A549 (cell line): ENCODE measurements at regions of chr10 and their contacts with region 1.

Region 1: DNA sequence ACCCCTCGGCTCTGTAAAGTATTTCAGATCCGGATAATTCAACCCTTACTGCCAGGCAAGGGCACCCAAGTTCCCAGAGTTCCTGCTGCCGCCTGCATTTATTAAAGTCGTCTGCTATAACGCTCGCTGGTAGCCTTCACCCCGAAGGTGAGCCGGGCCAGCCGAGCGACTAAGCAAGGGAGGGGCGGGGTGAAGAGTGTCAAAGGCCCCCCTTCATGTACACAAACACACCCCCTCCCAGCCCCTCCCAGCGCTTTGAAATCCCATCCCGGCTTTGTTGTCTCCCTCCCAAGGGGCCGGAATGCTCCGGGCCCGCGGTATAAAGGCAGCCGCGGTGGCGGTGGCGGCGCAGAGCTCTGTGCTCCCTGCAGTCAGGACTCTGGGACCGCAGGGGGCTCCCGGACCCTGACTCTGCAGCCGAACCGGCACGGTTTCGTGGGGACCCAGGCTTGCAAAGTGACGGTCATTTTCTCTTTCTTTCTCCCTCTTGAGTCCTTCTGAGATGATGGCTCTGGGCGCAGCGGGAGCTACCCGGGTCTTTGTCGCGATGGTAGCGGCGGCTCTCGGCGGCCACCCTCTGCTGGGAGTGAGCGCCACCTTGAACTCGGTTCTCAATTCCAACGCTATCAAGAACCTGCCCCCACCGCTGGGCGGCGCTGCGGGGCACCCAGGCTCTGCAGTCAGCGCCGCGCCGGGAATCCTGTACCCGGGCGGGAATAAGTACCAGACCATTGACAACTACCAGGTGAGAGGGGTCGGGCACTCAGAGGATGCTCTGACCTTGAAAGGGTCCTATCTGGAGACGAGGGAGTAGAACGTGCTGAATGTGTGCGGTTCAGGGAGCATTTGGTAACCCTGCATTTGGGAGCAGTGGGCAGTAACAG is at the start of gene DKK1:
- DNase-seq: peak; percentile 93 to 95
- ATAC-seq: peak; percentile 79 to 84
- H3K4me3 ChIP-seq: peak within 1 kb of the TSS; percentile 83
- H3K27ac ChIP-seq: peak within 1 kb of the TSS; percentile 89 to 94
- H3K4me1 ChIP-seq: peaks cover 37% of the 10 kb centered on the region
- CTCF ChIP-seq: peak; percentile 95
- EP300 ChIP-seq: peak in 1 of 2 experiments; percentile 53; a peak in 2 of 5 replicates
- POLR2A ChIP-seq: peak; percentile 100
- RAD21 ChIP-seq: peak; percentile 69 to 85
- polyA plus RNA-seq, gene DKK1: 375 and 538 TPM in 2 replicates

Region 2: GRCh38 chr10:52443419-52444388 is 129.5 kb after region 1 on chr10:
- CTCF ChIA-PET with region 1: interaction called, 18 read pairs
- POLR2A ChIA-PET with region 1: interaction called, 14 read pairs
- DNase-seq: peak; percentile 43 to 91
- ATAC-seq: peak; percentile 90
- H3K4me3 ChIP-seq: no peak overlapping the region
- H3K27ac ChIP-seq: peak overlapping the region; percentile 84 to 87
- H3K4me1 ChIP-seq: peaks cover 59% of the 10 kb centered on the region
- CTCF ChIP-seq: no peak
- EP300 ChIP-seq: peak; percentile 91; a peak in 4 of 5 replicates
- POLR2A ChIP-seq: no peak
- RAD21 ChIP-seq: peak; percentile 24 to 36; a peak in 2 of 5 replicates

Region 3: GRCh38 chr10:52488606-52489485 is 174.7 kb after region 1 on chr10:
- CTCF ChIA-PET with region 1: interaction called, 385 read pairs
- POLR2A ChIA-PET with region 1: interaction called, 44 read pairs
- DNase-seq: peak in 1 of 2 experiments; percentile 57
- ATAC-seq: peak in 1 of 2 experiments; percentile 73; a peak in 3 of 6 replicates
- H3K4me3 ChIP-seq: no peak overlapping the region
- H3K27ac ChIP-seq: peak overlapping the region; percentile 74 to 87
- H3K4me1 ChIP-seq: peaks cover 41% of the 10 kb centered on the region
- CTCF ChIP-seq: peak; percentile 80
- EP300 ChIP-seq: no peak
- POLR2A ChIP-seq: no peak
- RAD21 ChIP-seq: peak; percentile 86 to 93

Region 4: DNA sequence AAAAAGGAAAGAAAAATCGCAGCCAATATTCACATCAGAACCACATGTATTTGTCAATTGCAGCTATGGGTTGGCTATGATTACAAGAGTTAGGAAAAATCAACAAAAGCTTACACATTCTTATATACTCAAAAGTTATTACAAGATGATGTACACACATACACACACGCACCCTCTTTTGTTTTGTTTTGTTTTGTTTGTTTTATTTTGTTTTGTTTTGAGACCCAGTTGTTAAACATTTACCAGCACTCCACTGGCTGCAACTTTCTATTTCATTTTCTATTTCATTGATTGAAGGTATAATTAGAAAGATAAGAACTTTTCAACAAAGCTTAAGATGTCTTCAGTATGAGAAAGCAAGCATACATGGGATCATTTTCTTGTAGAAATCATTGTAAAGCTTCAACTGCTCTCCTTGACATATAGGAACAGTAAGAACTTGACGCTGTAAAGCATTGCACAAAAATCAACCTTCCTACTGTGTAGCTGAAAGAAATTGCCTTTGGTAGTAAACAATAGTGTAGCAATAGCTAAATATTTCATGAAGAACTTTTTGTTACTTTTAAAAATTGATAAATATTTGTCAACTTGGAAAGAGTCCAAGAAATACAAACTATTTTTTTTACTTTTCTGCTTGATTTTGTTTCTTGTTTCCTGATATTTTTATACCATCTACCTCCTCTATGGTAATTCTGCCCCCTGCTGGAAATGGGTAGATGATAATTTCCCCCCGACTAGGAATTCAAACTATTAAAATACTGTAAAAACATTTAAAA is 252.5 kb after region 1 on chr10:
- CTCF ChIA-PET with region 1: interaction called, 95 read pairs
- POLR2A ChIA-PET with region 1: interaction called, 7 read pairs
- DNase-seq: peak; percentile 32 to 65
- ATAC-seq: peak; percentile 59 to 83; a peak in 4 of 6 replicates
- H3K4me3 ChIP-seq: no peak overlapping the region
- H3K27ac ChIP-seq: peak overlapping the region; percentile 37 to 45
- H3K4me1 ChIP-seq: peaks cover 12% of the 10 kb centered on the region
- CTCF ChIP-seq: peak; percentile 87
- EP300 ChIP-seq: no peak
- POLR2A ChIP-seq: no peak
- RAD21 ChIP-seq: peak; percentile 91 to 92